GM10248 (cell line): ENCODE measurements at regions of chr3 and their contacts with region 1.

Region 1: DNA sequence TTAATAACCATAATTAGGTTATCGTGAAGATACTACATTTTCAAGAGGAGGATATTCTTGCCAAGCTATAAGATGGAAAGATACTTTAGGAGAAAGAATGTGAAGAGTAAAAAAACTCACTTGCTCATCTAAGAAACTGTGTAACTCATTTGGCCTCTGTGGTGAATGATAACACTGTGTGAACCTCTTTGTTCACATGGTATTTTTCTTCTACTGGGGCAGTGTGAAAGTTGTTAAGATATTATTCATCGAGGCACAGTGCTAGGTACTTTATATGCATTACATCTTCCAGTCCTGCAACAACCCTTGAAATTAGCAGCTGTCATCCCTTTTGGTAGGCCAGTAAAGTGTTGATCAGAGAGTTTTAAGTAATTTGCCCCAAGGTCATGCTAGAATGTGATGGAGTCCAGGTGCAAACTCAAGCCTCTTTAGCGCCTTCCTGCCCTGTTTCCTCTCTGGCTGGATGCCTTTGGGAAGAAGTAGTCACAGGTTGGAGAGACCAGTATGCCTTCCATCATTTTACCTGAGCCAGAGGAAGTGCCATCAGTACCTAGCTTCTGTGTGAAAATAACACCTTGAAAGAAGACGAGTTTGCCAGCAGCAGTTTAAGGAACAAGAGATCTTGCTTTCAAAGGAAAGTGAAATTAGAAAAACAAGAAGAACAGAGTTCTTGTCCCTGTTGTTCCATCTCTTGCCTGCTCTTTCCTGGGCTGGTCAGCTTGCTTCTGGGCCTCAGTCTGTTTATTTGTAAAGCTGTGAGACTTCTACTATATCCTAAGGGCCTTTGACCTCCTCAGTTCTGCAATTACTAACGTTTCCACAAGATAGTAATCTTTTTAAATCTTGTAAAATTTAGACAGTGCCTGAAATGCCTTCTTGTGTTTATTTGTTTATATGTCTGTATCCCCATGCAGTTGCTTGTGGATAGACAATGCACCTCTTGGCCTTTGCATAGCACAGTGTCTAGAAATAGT is 179.3 kb downstream of the FNDC3B start:
- DNase-seq: no peak
- CTCF ChIP-seq: no peak

Region 2: GRCh38 chr3:172201136-172201869 is 17.3 kb before region 1 on chr3:
- CTCF ChIA-PET with region 1: interaction called, 11 read pairs
- POLR2A ChIA-PET with region 1: no interaction called
- DNase-seq: no peak
- CTCF ChIP-seq: no peak

Region 3: DNA sequence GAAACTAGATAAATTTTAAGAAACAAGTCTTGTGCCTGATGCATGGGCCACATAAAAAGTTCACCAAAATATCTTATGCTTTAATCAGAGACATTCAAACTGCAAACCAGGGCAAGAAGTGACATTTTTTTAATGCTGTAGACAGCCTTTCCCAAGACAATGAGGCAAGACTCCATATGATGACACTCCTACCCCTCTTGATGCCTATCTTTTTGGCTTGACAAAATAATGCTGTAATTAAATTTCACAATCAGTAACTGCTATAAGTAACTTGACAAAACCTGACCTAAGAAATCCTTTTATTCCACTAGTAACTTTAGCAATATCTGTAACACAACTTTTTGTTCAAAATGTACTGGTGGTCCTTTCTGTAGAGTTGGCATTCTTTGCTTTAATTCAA is 580.6 kb after region 1 on chr3:
- CTCF ChIA-PET with region 1: no interaction called
- POLR2A ChIA-PET with region 1: no interaction called
- DNase-seq: no peak
- CTCF ChIP-seq: no peak